RWPE1 (cell line): ENCODE measurements at regions of chr10 and their contacts with region 1.

Region 1: DNA sequence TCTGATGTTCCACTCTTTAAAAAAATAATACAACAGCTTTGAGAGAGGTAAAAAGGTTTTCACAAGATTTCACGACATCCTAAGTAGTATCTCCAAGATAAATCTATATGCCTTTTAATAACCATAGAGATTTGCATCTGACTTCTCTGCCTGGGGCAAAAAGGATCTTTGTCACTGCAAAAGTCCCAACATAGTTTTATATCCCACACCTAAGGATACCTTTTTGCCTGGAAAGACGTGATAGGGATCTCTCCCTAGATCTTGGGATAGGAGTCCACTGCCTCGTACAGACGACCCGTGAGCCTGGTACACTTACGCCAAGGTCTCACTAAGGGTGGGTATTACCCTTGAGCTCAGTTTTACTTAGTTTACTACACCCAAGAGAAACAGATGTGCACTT is 31.5 kb upstream of the SVIL start:
- DNase-seq: no peak
- H3K27ac ChIP-seq: no peak overlapping the region
- CTCF ChIP-seq: no peak

Region 2: GRCh38 chr10:29646238-29646902 is 19.9 kb before region 1 on chr10:
- CTCF ChIA-PET with region 1: no interaction called
- POLR2A ChIA-PET with region 1: no interaction called
- DNase-seq: peak; percentile 69
- H3K27ac ChIP-seq: peak overlapping the region; percentile 77
- CTCF ChIP-seq: no peak

Region 3: GRCh38 chr10:29702273-29703164 is 36.3 kb after region 1 on chr10:
- CTCF ChIA-PET with region 1: no interaction called
- POLR2A ChIA-PET with region 1: no interaction called
- DNase-seq: no peak
- H3K27ac ChIP-seq: no peak overlapping the region
- CTCF ChIP-seq: no peak

Region 4: DNA sequence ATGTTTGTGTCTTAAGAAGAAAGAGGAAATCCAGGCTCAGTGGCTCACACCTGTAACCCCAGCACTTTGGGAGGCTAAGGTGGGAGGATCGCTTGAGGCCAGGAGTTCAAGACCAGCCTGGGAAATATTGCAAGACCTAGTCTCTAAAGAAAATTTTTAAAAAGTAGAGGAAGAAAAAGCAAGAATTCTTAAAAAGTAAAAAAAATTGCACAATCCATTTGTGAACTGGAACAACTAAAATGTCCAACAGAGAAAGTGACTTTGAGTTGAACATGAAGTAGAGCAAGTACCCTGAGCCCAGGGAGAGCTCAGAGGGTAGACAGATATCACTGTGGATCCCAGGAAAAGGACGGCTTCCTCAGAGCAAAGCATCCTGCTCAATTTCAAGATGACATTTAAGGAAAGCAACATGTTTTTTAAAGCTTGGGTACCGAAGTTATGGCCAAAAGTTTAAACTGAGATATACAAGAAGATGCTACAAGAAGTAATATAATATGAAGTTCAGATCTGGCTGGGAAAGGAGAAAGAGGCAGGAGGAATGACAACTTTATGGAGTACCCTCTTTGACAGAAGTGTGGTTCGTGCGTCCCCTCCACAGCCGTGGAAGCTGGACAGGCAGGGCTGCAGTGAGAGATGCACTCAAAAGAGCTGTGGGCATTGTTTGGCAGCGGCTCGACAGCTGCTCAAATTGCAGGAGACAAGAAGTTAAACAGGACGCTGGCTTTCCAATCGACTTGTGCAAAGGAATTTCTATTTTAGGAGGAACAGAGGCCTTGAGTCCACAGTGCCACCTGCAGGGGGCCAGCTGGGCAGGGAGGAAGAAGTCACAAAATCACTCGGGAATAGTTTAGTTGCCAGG is 191.8 kb after region 1 on chr10:
- CTCF ChIA-PET with region 1: interaction called, 10 read pairs
- POLR2A ChIA-PET with region 1: no interaction called
- DNase-seq: peak; percentile 71
- H3K27ac ChIP-seq: peak overlapping the region; percentile 81
- CTCF ChIP-seq: peak; percentile 70